Activated B cell treated with CpG ODN at 0.5 μM for 24 hours (primary cell): ENCODE measurements at regions of chr5 and their contacts with region 1.

Region 1: DNA sequence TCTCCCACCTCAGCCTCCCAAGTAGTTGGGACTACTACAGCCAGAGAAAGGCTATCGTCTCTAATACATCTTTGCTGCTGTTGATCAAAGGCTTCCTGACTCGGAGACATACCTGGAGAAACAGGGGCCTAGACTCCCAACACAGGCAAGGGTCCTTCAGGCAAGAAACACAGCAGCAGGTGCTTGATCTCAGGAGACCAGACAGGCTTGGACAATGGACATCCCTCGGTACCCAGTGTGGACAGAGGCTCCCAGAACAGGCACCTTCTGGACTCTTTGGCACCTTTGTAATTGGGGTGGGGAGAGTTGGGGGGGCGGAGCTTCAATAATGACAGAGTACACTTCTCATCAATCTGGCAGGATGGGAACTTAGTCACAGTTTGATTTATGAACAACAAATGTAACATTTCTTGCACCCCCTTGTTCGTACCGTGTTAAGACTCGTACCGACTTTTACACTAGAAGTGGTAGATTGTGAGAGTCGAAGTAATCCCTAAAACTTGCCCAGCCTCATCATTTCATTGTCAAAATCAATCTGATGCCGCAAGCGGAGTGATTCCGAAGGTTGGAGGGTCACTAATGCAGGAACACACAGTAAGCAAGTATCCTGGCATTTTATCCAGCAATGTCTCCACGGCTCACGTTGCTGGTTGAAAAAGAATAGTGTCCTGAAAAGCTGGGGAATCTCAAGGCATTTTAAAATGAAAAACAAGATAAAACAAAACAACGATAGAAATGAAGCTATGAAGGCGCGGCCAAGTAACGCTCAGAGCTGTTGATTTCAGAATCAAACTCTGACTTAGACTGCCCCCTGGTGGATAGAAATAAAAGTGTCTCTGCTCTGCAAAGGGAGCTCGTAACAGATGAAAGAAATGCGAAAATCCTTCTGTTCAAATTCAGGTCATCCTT is 46.4 kb upstream of the STK32A start:
- DNase-seq: no peak
- ATAC-seq: no peak
- H3K4me3 Mint-ChIP-seq: no peak overlapping the region
- H3K27ac Mint-ChIP-seq: no peak overlapping the region
- H3K4me1 Mint-ChIP-seq: peaks cover 2% of the 10 kb centered on the region
- H3K27me3 Mint-ChIP-seq: no peaks in the 10 kb centered on the region
- CTCF ChIP-seq: no peak

Region 2: GRCh38 chr5:146541958-146542849 is 646.2 kb before region 1 on chr5:
- CTCF ChIA-PET with region 1: interaction called, 14 read pairs
- POLR2A ChIA-PET with region 1: no interaction called
- intact Hi-C with region 1: no loop called
- DNase-seq: peak; percentile 36
- ATAC-seq: peak; percentile 81
- H3K4me3 Mint-ChIP-seq: no peak overlapping the region
- H3K27ac Mint-ChIP-seq: no peak overlapping the region
- H3K4me1 Mint-ChIP-seq: peaks cover 2% of the 10 kb centered on the region
- H3K27me3 Mint-ChIP-seq: peaks cover 5% of the 10 kb centered on the region
- CTCF ChIP-seq: peak; percentile 33

Region 3: GRCh38 chr5:147223948-147224791 is 35.7 kb after region 1 on chr5:
- CTCF ChIA-PET with region 1: no interaction called
- POLR2A ChIA-PET with region 1: no interaction called
- intact Hi-C with region 1: no loop called
- DNase-seq: no peak
- ATAC-seq: no peak
- H3K4me3 Mint-ChIP-seq: no peak overlapping the region
- H3K27ac Mint-ChIP-seq: no peak overlapping the region
- H3K4me1 Mint-ChIP-seq: no peaks in the 10 kb centered on the region
- H3K27me3 Mint-ChIP-seq: no peaks in the 10 kb centered on the region
- CTCF ChIP-seq: no peak

Region 4: GRCh38 chr5:148120317-148120716 is 931.9 kb after region 1 on chr5:
- CTCF ChIA-PET with region 1: no interaction called
- POLR2A ChIA-PET with region 1: no interaction called
- intact Hi-C with region 1: no loop called
- DNase-seq: no peak
- ATAC-seq: no peak
- H3K4me3 Mint-ChIP-seq: no peak overlapping the region
- H3K27ac Mint-ChIP-seq: no peak overlapping the region
- H3K4me1 Mint-ChIP-seq: no peaks in the 10 kb centered on the region
- H3K27me3 Mint-ChIP-seq: no peaks in the 10 kb centered on the region
- CTCF ChIP-seq: no peak